GM10248 (cell line): ENCODE measurements at regions of chr1 and their contacts with region 1.

Region 1: GRCh38 chr1:39701049-39701439 is 9.8 kb upstream of the HPCAL4 start:
- DNase-seq: no peak
- CTCF ChIP-seq: no peak

Region 2: DNA sequence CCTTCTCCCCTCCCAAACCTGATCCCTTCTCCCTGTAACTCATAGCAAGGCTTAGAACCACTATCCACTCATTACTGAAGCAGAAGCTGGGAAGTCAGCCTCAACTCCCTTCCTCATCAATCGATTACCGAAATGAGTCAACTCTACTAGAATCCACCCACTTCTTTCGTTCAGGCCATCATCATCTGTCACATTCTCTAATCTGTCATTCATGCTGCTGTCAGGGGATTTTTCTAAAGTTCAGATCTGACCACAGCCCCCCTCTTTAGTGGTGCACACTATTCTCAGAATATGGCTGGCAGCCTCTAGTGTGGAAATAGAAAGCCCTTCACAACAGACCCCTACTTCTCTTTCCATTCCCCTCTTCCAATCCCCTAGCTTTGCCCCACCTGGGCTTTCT is 34.3 kb before region 1 on chr1:
- CTCF ChIA-PET with region 1: interaction called, 17 read pairs
- POLR2A ChIA-PET with region 1: no interaction called
- DNase-seq: peak; percentile 85
- CTCF ChIP-seq: no peak

Region 3: DNA sequence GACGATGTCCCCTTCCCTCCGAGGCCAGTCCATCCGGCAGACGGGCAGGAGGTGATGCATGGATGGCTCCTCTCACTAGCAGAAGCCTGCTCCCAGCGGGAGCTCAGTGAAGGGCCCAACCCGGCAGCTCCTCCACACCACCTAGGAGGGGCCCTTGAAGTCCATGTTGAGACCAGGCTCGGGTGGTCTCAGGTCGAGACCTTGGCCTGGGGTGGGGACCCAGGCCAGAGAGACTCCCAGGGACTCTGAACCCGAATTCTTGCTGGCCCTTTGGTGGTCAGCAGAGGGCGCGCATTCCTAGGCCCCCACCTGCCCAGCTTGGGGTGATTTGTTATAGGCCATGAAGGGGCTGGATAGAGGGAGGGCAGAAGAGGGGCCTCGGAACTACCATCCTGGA is 28.5 kb before region 1 on chr1:
- CTCF ChIA-PET with region 1: interaction called, 17 read pairs
- POLR2A ChIA-PET with region 1: no interaction called
- DNase-seq: peak; percentile 61
- CTCF ChIP-seq: peak; percentile 55

Region 4: DNA sequence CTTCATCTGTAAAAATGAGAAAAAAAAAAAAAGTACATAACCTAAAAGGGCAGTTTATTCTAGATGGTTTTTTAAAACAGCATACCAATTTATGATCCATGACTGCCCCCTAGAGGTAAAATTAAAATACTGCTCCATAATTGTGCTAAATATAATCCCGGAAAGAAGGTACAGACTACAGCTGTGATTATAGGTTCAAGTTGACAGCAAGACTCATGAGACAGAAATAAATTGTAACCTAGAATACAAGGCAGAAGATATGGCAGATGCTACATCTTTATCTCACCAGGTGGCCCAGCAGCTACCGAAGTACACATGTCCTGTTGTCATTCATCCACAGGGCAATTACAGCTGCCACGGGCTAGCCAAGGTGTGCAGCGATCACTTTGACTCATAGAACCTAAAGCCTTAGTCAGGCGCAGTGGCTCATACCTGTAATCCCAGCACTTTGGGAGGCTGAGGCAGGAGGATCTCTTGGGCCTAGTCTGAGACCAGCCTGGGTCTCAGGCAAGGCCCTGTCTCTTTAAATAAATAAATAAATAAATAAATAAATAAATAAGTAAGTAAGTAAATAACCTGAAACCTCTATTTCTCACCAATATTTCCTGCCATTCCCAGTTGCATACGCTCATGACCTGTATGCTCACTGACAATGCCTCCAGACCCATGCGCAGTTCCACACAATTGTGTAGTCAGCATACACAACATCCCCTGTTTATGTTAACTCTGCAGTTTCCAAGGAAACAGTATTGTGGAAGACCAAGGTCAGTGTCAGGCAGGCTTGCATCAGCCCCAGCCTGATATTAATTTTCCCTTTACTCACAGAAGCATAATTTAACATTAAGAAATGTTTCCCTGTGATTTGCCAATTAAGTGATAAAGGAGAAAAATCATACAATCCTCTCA is 19.3 kb after region 1 on chr1:
- CTCF ChIA-PET with region 1: interaction called, 32 read pairs
- POLR2A ChIA-PET with region 1: interaction called, 3 read pairs
- DNase-seq: peak; percentile 47
- CTCF ChIP-seq: peak; percentile 51